HEK293 (cell line): ENCODE measurements at regions of chr9 and their contacts with region 1.

Region 1: DNA sequence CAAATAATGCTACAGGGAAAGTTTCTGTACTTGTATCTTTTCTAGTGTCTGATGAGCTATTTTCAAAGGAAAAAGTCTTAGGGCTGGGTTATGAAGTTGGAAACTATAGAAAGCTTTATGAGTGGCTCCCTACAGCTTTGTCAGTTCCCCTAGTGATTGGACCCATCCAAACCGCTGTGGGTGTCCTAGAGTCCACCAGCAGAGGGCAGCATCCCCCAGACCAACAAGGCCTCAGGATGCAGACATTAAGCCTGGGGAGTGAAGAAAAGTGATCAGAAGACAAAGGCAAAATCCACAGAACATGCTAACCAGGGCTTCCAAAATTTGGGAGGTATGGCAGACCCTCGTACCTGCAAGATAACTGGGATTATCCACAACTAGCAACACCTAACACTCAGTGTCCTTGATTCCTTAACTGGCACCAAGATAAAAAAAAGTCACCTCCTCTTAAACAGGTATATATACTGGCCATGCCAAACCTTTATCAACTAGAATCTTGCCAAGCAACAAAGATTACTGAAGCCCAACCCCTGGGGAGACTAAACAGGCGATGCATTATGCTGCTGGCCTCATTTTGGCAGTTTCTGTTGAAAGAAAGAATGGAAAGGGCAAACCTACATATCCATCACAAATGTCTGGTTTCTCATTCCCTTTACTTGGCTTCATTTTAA is 110.4 kb upstream of the NR5A1 start:
- H3K4me3 ChIP-seq: no peak overlapping the region
- H3K27ac ChIP-seq: no peak overlapping the region
- H3K4me1 ChIP-seq: peaks cover 10% of the 10 kb centered on the region
- CTCF ChIP-seq: peak; percentile 68

Region 2: DNA sequence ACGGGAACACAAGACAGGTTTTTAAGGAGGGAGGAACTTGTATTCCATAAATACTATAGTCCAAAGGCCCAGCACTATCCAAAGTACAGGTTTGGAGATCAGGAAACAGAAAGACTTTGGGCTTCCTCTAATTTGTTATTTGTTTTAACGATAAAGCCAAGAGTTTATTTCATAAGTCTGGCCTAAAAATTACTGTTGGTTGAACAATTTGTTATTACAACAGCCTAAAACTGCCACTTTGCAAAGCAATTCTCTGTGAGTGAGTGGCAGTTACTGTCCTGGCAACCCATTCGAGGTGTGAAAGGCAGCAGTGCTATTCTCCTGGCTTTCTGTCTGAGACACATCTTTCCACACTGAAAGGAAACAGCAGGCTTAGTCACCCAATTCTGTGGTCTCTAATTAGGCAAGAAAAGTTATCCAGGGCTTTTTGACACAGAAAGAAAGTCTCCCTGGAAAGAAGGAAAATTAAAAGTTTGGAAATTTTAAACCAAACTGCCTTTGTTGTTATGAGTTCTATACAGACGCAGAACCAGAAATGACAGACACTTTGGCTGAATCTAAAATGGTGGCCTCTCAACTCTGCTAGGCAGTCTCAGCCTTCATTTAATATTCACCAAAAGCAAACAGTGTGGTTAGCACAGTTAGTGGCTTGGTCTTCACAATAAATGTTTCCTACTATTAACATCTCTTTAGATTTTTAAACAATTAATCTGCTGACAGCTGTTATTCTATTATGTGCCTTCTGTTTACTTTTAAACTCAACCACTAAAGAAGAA is 236.2 kb before region 1 on chr9:
- CTCF ChIA-PET with region 1: no interaction called
- POLR2A ChIA-PET with region 1: no interaction called
- H3K4me3 ChIP-seq: no peak overlapping the region
- H3K27ac ChIP-seq: no peak overlapping the region
- H3K4me1 ChIP-seq: peaks cover 6% of the 10 kb centered on the region; the same call in 1 of the 2 replicates
- CTCF ChIP-seq: no peak

Region 3: GRCh38 chr9:124441291-124441690 is 176.3 kb before region 1 on chr9:
- CTCF ChIA-PET with region 1: no interaction called
- POLR2A ChIA-PET with region 1: no interaction called
- H3K4me3 ChIP-seq: no peak overlapping the region
- H3K27ac ChIP-seq: no peak overlapping the region
- H3K4me1 ChIP-seq: no peaks in the 10 kb centered on the region
- CTCF ChIP-seq: no peak

Region 4: GRCh38 chr9:124593651-124594058 is 24.0 kb before region 1 on chr9:
- CTCF ChIA-PET with region 1: interaction called, 10 read pairs
- POLR2A ChIA-PET with region 1: no interaction called
- H3K4me3 ChIP-seq: no peak overlapping the region
- H3K27ac ChIP-seq: no peak overlapping the region
- H3K4me1 ChIP-seq: peaks cover 15% of the 10 kb centered on the region
- CTCF ChIP-seq: no peak

Region 5: DNA sequence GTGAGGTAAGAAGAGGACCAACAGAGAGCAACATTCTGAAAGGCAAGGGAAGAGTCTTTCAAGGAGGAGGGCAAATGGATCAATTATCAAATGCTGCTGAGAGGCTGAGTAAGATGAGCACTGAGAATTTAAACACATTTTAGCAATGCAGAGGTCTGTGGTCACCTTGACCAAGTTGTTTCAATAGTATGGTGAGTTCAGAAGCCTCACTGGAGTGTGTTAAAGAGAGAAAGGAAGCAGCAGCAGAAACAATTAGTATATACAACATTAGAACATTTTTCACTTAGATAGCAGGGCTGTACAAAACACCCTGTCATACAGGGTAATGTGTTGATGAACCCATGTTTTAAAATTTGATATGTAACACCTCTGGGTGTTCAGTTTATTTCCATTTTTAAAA is 22.0 kb after region 1 on chr9:
- CTCF ChIA-PET with region 1: interaction called, 48 read pairs
- POLR2A ChIA-PET with region 1: no interaction called
- H3K4me3 ChIP-seq: no peak overlapping the region
- H3K27ac ChIP-seq: no peak overlapping the region
- H3K4me1 ChIP-seq: no peaks in the 10 kb centered on the region
- CTCF ChIP-seq: no peak

Region 6: GRCh38 chr9:124697326-124698200 is 80.0 kb after region 1 on chr9:
- CTCF ChIA-PET with region 1: interaction called, 14 read pairs
- POLR2A ChIA-PET with region 1: no interaction called
- H3K4me3 ChIP-seq: no peak overlapping the region
- H3K27ac ChIP-seq: no peak overlapping the region
- H3K4me1 ChIP-seq: peaks cover 22% of the 10 kb centered on the region
- CTCF ChIP-seq: no peak

Region 7: GRCh38 chr9:124754289-124754688 is 136.7 kb after region 1 on chr9:
- CTCF ChIA-PET with region 1: interaction called, 22 read pairs
- POLR2A ChIA-PET with region 1: no interaction called
- H3K4me3 ChIP-seq: no peak overlapping the region
- H3K27ac ChIP-seq: no peak overlapping the region
- H3K4me1 ChIP-seq: peaks cover 34% of the 10 kb centered on the region
- CTCF ChIP-seq: no peak

Region 8: GRCh38 chr9:124852829-124853531 is 235.4 kb after region 1 on chr9 and contains the start of gene WDR38:
- CTCF ChIA-PET with region 1: interaction called, 29 read pairs
- POLR2A ChIA-PET with region 1: no interaction called
- H3K4me3 ChIP-seq: peak within 1 kb of the TSS; percentile 47
- H3K27ac ChIP-seq: no peak within 1 kb of the TSS
- H3K4me1 ChIP-seq: no peaks in the 10 kb centered on the region
- CTCF ChIP-seq: peak; percentile 98

Region 9: DNA sequence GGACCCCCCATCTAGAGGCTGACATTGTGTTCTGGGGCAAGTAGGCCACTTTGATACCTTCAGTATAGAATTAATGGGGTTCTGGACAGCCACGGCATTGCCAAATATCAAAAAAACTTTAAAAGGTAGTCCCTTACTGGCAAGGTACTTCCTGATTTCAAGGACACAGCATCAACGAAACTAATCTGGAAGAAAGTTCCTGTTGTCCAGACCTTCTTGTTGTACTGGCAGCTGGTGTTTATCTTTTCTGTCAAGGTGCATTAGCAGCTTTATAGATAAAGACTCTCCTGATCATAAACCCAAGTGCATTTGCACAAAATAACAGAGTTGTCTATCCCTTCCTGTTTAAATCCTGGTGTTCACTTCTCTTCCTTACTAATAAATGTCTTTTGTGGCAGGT is 347.0 kb after region 1 on chr9:
- CTCF ChIA-PET with region 1: no interaction called
- POLR2A ChIA-PET with region 1: no interaction called
- H3K4me3 ChIP-seq: no peak overlapping the region
- H3K27ac ChIP-seq: no peak overlapping the region
- H3K4me1 ChIP-seq: no peaks in the 10 kb centered on the region
- CTCF ChIP-seq: no peak